ENCODE measurements at regions of chr12 and their contacts with region 1.

Region 1: GRCh38 chr12:65313719-65314317 is 35.3 kb downstream of the MSRB3 start:
- DNase-seq: no peak
- ATAC-seq: no peak
- H3K4me3 ChIP-seq: no peak overlapping the region
- H3K27ac ChIP-seq: no peak overlapping the region
- H3K4me1 ChIP-seq: no peaks in the 10 kb centered on the region
- H3K27me3 ChIP-seq: no peaks in the 10 kb centered on the region
- CTCF ChIP-seq: peak; percentile 37

Region 2: GRCh38 chr12:65217086-65217485 is 96.7 kb before region 1 on chr12:
- intact Hi-C with region 1: no loop called
- DNase-seq: no peak
- ATAC-seq: no peak
- H3K4me3 ChIP-seq: no peak overlapping the region
- H3K27ac ChIP-seq: no peak overlapping the region
- H3K4me1 ChIP-seq: no peaks in the 10 kb centered on the region
- H3K27me3 ChIP-seq: no peaks in the 10 kb centered on the region
- CTCF ChIP-seq: no peak

Region 3: DNA sequence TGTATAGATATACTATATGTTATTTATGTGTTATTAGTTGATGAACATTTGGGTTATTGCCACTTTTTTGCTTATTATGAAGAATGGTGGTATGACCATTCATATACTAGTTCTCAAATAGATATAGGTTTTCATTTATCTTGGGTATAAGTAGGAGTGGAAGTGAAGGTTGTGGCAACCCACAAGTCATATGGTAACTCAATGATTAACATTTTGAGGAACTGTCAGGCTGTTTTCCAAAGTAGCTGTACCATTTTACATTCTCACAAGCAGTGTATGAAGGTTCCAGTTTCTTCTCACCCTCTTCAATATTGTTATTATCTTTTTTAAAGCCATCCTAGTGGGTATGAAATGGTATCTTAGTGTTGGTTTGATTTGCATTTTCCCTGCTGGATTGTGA is 54.3 kb before region 1 on chr12:
- intact Hi-C with region 1: no loop called
- DNase-seq: no peak
- ATAC-seq: no peak
- H3K4me3 ChIP-seq: no peak overlapping the region
- H3K27ac ChIP-seq: no peak overlapping the region
- H3K4me1 ChIP-seq: no peaks in the 10 kb centered on the region
- H3K27me3 ChIP-seq: no peaks in the 10 kb centered on the region
- CTCF ChIP-seq: no peak

Region 4: GRCh38 chr12:65666876-65667275 is 353.1 kb after region 1 on chr12:
- intact Hi-C with region 1: no loop called
- DNase-seq: no peak
- ATAC-seq: no peak
- H3K4me3 ChIP-seq: no peak overlapping the region
- H3K27ac ChIP-seq: no peak overlapping the region
- H3K4me1 ChIP-seq: no peaks in the 10 kb centered on the region
- H3K27me3 ChIP-seq: peaks cover 5% of the 10 kb centered on the region
- CTCF ChIP-seq: no peak

Region 5: DNA sequence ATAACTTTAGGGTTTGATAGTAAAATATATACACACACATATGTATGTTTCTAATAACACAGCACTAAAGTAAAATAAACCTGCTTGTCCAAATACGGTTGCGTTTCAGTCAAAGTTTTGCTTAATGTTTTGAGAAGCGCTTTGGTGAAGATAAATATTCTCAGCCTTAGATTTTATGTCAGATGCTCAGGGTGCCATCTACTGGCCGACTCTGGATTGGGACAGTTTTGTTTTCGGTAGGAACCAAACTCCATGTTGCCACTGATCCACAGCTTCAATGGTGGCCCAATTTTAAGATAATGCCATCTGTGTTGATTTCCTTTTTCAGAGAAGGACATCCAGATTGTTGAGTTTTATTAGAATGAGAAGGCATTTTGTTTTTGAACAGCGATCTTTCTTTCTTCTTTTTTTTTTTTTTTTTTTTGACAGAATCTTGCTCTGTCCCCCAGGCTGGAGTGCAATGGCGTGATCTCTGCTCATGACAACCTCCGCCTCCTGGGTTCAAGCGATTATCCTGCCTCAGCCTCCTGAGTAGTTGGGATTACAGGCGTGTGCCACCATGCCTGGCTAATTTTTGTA is 773.6 kb after region 1 on chr12:
- intact Hi-C with region 1: loop called (anchors 10 kb)
- DNase-seq: peak; percentile 56
- ATAC-seq: peak; percentile 74
- H3K4me3 ChIP-seq: no peak overlapping the region
- H3K27ac ChIP-seq: no peak overlapping the region
- H3K4me1 ChIP-seq: peaks cover 3% of the 10 kb centered on the region
- H3K27me3 ChIP-seq: peaks cover 3% of the 10 kb centered on the region
- CTCF ChIP-seq: peak; percentile 74